Endothelial cell of umbilical vein (primary cell): ENCODE measurements at regions of chr5 and their contacts with region 1.

Region 1: GRCh38 chr5:126594676-126595485 is at the start of gene ALDH7A1:
- DNase-seq: peak; percentile 96
- H3K4me3 ChIP-seq: peak within 1 kb of the TSS; percentile 49 to 60 (median 58)
- H3K27ac ChIP-seq: peak within 1 kb of the TSS; percentile 68
- H3K4me1 ChIP-seq: peaks cover 27% of the 10 kb centered on the region
- H3K27me3 ChIP-seq: no peaks in the 10 kb centered on the region
- CTCF ChIP-seq: peak; percentile 58 to 65
- POLR2A ChIP-seq: peak; percentile 94
- total RNA-seq, gene ALDH7A1: 75.7 and 103 TPM in 2 replicates

Region 2: GRCh38 chr5:126422989-126423788 is 171.7 kb before region 1 on chr5 and contains the start of gene GRAMD2B:
- CTCF ChIA-PET with region 1: interaction called, 4 read pairs
- POLR2A ChIA-PET with region 1: no interaction called
- dilution Hi-C with region 1: no loop called
- intact Hi-C with region 1: loop called (anchors 1 kb)
- DNase-seq: peak; percentile 82
- H3K4me3 ChIP-seq: peak within 1 kb of the TSS; percentile 14 to 83 (median 47)
- H3K27ac ChIP-seq: peak within 1 kb of the TSS; percentile 13
- H3K4me1 ChIP-seq: peaks cover 7% of the 10 kb centered on the region
- H3K27me3 ChIP-seq: peaks cover 0 to 2% of the 10 kb centered on the region in 2 experiments
- CTCF ChIP-seq: no peak
- POLR2A ChIP-seq: no peak
- total RNA-seq, gene GRAMD2B: 4.6 and 5.5 TPM in 2 replicates

Region 3: GRCh38 chr5:126544087-126544740 is 50.7 kb before region 1 on chr5:
- CTCF ChIA-PET with region 1: interaction called, 18 read pairs
- POLR2A ChIA-PET with region 1: no interaction called
- dilution Hi-C with region 1: no loop called
- intact Hi-C with region 1: loop called (anchors 1 kb)
- DNase-seq: peak; percentile 53
- H3K4me3 ChIP-seq: no peak overlapping the region
- H3K27ac ChIP-seq: no peak overlapping the region
- H3K4me1 ChIP-seq: no peaks in the 10 kb centered on the region
- H3K27me3 ChIP-seq: no peaks in the 10 kb centered on the region
- CTCF ChIP-seq: peak; percentile 46 to 66
- POLR2A ChIP-seq: no peak

Region 4: DNA sequence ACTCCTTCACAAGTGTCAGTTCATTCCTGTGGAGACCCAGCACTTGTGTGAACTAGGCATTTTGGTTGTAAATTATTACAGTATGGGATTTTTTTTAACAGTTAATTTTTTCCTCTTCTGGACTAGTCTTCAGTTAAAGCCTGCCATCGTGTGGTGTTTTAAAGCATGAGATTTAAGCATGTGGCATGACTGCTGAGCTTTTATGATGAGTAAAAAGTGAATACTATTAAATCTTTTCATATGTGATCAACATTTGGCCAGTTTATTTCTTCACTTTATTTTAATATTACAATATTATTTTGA is 207.1 kb after region 1 on chr5:
- CTCF ChIA-PET with region 1: interaction called, 11 read pairs
- POLR2A ChIA-PET with region 1: no interaction called
- dilution Hi-C with region 1: no loop called
- intact Hi-C with region 1: no loop called
- DNase-seq: peak; percentile 46
- H3K4me3 ChIP-seq: no peak overlapping the region
- H3K27ac ChIP-seq: no peak overlapping the region
- H3K4me1 ChIP-seq: peaks cover 6% of the 10 kb centered on the region
- H3K27me3 ChIP-seq: no peaks in the 10 kb centered on the region
- CTCF ChIP-seq: no peak
- POLR2A ChIP-seq: no peak